Activated T-helper 2 cell treated with anti-CD3 and anti-CD28 coated beads, Interferon-gamma antibody, Interleukin-2, Interleukin-4, amounts not matched to agents 10 μg/mL and 5 μg/mL and 100 μg/mL, durations not matched to agents 14 hours and 24 hours and 36 hours (primary cell): ENCODE measurements at regions of chr1 and their contacts with region 1.

Region 1: DNA sequence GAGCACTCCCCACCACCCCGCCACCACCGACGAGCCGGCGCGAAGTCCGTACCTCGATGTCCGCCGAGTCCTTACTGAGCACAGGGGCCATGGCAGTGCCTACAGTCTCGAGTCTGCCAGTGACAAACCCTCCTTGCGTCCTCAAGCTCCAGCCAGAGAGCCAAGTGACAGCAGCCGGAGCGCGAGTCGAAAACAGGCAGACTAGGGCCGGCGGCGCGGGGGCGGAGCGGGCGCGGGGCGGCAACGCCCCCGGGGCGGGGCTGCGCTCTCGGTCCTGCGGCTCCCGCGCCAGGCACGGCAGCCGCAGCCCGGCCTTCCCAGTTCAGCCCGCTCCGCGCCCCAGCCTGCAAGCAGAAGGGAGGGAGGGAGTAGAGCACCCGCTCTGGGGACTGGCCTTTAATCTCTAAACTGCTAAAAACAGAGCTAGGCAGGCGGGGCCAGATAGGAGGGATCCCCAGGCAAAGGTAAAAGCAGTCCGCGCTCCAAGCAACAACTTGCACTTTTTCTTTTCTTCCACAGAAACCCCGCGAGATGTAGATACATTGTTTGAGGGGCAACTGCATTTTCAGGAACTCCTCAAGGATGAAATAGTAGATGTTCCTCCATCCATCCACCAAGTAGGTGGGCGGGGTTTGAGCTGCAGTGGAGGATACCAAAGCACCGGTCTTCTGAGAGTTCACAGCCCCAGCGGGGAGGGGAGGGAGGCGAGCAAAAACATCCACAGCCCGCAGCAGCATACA is at the start of gene DPYD:
- DNase-seq: peak; percentile 83
- H3K4me3 Mint-ChIP-seq: peak within 1 kb of the TSS; percentile 93
- H3K27ac Mint-ChIP-seq: peak within 1 kb of the TSS; percentile 95
- H3K4me1 Mint-ChIP-seq: peaks cover 55% of the 10 kb centered on the region
- H3K27me3 Mint-ChIP-seq: no peaks in the 10 kb centered on the region
- total RNA-seq, gene DPYD: 11.9 and 12.5 TPM in 2 replicates

Region 2: DNA sequence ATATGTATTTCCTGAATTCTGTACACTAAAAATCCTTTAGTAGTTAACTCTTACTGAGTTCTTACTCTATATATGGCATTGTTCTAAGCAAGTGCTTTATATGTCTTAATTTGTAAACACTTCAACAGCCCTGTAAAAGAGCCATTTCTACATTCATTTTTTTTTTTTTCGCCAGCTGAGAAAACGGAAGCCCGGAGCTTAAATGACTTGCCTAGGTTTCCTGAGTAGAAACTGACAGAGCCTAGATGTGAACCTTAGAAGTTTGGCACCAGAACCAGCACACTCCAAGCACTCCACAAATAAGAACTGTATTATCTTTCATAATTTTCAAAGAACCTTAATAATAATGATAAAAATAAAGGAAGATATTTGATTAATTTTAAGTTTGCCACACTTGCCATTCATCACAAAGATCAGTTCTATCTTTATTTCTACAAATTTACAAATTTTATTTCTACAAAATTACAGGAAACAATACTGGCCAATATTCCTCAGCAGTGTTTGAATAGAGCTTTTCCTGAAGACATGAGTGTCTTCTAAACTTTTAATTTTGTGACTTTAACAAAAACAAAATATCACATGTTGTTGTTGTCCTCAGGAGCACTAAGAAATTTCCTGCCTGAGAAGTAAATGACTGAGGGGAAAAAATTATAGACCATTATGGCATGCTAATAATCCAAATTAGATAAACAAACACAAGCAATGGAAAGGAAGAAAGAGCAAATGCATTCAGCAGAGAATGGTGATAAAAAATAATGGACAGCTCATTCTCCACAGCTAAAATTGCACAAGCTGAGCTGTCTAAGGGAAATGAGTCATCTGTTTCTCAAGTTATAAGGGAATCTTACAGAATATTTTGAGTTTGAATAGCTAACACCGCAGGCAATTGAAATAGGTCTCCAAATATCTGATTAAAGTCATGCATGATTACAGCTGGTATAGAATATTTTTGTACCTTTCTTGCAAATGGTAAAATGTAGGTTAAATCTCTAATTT is 71.4 kb before region 1 on chr1:
- intact Hi-C with region 1: loop called (anchors 5 kb)
- DNase-seq: no peak
- H3K4me3 Mint-ChIP-seq: peak overlapping the region; percentile 13
- H3K27ac Mint-ChIP-seq: no peak overlapping the region
- H3K4me1 Mint-ChIP-seq: peaks cover 15% of the 10 kb centered on the region
- H3K27me3 Mint-ChIP-seq: no peaks in the 10 kb centered on the region

Region 3: GRCh38 chr1:97886199-97886598 is 34.8 kb before region 1 on chr1:
- intact Hi-C with region 1: no loop called
- DNase-seq: no peak
- H3K4me3 Mint-ChIP-seq: no peak overlapping the region
- H3K27ac Mint-ChIP-seq: no peak overlapping the region
- H3K4me1 Mint-ChIP-seq: peaks cover 9% of the 10 kb centered on the region
- H3K27me3 Mint-ChIP-seq: no peaks in the 10 kb centered on the region

Region 4: GRCh38 chr1:97943354-97943753 is 22.4 kb after region 1 on chr1:
- intact Hi-C with region 1: loop called (anchors 1 kb)
- DNase-seq: no peak
- H3K4me3 Mint-ChIP-seq: peak overlapping the region; percentile 11
- H3K27ac Mint-ChIP-seq: peak overlapping the region; percentile 18
- H3K4me1 Mint-ChIP-seq: peaks cover 37% of the 10 kb centered on the region
- H3K27me3 Mint-ChIP-seq: peaks cover 11% of the 10 kb centered on the region

Region 5: GRCh38 chr1:98019747-98020146 is 98.7 kb after region 1 on chr1:
- intact Hi-C with region 1: loop called (anchors 5 kb)
- DNase-seq: no peak
- H3K4me3 Mint-ChIP-seq: no peak overlapping the region
- H3K27ac Mint-ChIP-seq: no peak overlapping the region
- H3K4me1 Mint-ChIP-seq: peaks cover 27% of the 10 kb centered on the region
- H3K27me3 Mint-ChIP-seq: peaks cover 32% of the 10 kb centered on the region

Region 6: DNA sequence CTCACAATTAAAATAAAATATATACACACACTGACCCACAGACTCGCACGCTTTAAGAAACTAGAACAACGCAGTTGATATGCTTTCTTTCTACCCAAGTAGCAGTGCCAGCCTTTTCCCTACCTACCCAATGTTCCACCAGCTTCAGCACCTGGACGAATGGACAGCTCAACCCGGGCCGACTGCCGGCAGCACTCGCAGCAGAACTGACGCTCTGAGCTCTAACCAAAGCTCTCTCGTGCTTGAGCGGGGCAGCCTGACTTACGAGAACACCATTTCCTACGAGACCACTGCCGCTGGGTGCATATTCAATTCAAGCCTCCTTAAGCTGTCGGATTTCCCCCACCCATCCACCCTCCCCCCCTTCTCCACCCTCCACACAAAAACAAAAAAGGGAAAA is 127.2 kb after region 1 on chr1:
- intact Hi-C with region 1: loop called (anchors 2 kb)
- DNase-seq: peak; percentile 58
- H3K4me3 Mint-ChIP-seq: no peak overlapping the region
- H3K27ac Mint-ChIP-seq: no peak overlapping the region
- H3K4me1 Mint-ChIP-seq: peaks cover 44% of the 10 kb centered on the region
- H3K27me3 Mint-ChIP-seq: peaks cover 89% of the 10 kb centered on the region

Region 7: DNA sequence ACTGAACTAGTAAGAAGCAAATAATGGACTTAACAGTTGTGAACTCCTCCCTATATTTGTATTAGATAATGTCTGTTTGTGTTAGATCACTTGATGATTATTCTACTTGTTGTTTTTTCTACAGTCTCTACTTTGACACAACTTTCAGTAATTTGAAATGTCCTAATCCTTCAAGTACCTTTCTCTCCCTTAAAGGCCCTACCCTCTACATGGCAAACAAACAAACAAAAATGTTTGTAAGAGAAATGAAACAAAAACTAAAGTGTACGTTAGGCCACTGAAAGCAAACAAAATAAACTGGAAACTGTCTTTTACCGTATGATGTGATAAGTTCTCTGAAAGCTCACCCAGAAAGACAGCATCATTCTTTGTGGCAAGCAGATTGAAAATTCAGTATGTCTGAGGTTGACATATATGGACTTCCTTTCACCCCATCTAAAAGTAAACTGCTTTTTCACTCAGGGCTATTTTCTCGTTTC is 484.6 kb after region 1 on chr1:
- intact Hi-C with region 1: loop called (anchors 5 kb)
- DNase-seq: no peak
- H3K4me3 Mint-ChIP-seq: peak overlapping the region; percentile 67
- H3K27ac Mint-ChIP-seq: peak overlapping the region; percentile 50
- H3K4me1 Mint-ChIP-seq: peaks cover 45% of the 10 kb centered on the region
- H3K27me3 Mint-ChIP-seq: peaks cover 3% of the 10 kb centered on the region